CD14-positive monocyte (primary cell): ENCODE measurements at regions of chr19 and their contacts with region 1.

Region 1: DNA sequence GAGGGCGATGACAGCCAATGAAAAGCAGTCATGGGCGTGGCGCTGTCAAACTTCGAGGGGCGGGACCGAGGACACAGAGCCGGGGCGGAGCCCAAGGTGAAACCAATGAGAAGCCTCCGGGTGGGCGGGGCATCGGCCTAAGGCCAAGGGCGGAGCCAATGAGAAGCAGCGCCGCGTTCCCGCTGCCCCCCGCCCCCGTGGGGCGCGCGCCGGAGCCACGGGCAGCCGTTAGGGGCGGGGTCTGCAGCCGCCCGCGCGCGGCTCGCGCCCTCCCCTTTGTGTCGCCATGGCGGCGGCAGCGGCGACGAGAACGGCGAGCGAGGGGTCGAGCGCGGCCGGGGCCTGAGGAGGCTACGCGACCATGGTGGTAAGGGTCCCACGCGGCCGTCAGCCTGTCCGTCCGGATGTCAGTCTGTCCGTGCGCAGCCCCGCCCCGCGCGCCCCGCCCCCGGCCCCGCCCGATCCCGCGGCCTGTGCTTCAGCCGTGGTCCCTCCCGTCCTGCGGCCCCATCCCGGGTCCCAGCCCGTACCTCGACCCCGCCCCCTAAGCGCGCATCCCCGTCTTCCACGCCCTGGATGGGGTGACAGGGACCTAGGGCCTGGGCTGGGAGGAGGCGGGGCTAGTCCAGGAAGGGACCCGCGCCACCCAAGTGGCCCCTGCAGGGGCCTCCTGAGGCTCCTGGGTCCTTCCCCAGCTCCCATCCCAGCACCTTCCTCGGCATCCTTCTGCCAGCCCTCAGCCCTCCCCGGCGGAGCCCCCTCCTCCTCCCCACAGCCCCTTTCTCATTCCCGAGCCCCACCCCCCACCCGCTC is at the start of gene ARHGAP33:
- DNase-seq: peak; percentile 95 to 99 (median 97)
- H3K4me3 ChIP-seq: peak within 1 kb of the TSS; percentile 63 to 80 (median 73)
- H3K4me3 Mint-ChIP-seq: peak within 1 kb of the TSS; percentile 84 to 85
- H3K27ac ChIP-seq: peak within 1 kb of the TSS in 1 of 2 donors; percentile 45
- H3K27ac Mint-ChIP-seq: peak within 1 kb of the TSS in 4 of 7 donors; percentile 21 to 80 (median 48)
- H3K4me1 ChIP-seq: peaks cover 14 to 19% of the 10 kb centered on the region in 2 donors
- H3K4me1 Mint-ChIP-seq: peaks cover 23% of the 10 kb centered on the region
- H3K27me3 ChIP-seq: no peaks in the 10 kb centered on the region
- H3K27me3 Mint-ChIP-seq: peaks cover 0 to 5% (median 4%) of the 10 kb centered on the region in 3 donors
- CTCF ChIP-seq: no peak
- polyA plus RNA-seq, gene ARHGAP33: 8.6 TPM in 1 of 3 donors, not detected in the others

Region 2: GRCh38 chr19:35869327-35870123 is 94.0 kb after region 1 on chr19:
- intact Hi-C with region 1: loop called in 1 of 2 experiments (anchors 10 kb)
- DNase-seq: peak; percentile 54 to 62 (median 57)
- H3K4me3 ChIP-seq: peak overlapping the region in 1 of 3 experiments; percentile 52
- H3K4me3 Mint-ChIP-seq: peak overlapping the region; percentile 50 to 78
- H3K27ac ChIP-seq: no peak overlapping the region
- H3K27ac Mint-ChIP-seq: peak overlapping the region in 1 of 7 donors; percentile 1
- H3K4me1 ChIP-seq: peaks cover 16 to 23% of the 10 kb centered on the region in 2 donors
- H3K4me1 Mint-ChIP-seq: peaks cover 15% of the 10 kb centered on the region
- H3K27me3 ChIP-seq: peaks cover 27 to 52% of the 10 kb centered on the region in 2 donors
- H3K27me3 Mint-ChIP-seq: peaks cover 47 to 70% (median 54%) of the 10 kb centered on the region in 3 donors
- CTCF ChIP-seq: no peak

Region 3: DNA sequence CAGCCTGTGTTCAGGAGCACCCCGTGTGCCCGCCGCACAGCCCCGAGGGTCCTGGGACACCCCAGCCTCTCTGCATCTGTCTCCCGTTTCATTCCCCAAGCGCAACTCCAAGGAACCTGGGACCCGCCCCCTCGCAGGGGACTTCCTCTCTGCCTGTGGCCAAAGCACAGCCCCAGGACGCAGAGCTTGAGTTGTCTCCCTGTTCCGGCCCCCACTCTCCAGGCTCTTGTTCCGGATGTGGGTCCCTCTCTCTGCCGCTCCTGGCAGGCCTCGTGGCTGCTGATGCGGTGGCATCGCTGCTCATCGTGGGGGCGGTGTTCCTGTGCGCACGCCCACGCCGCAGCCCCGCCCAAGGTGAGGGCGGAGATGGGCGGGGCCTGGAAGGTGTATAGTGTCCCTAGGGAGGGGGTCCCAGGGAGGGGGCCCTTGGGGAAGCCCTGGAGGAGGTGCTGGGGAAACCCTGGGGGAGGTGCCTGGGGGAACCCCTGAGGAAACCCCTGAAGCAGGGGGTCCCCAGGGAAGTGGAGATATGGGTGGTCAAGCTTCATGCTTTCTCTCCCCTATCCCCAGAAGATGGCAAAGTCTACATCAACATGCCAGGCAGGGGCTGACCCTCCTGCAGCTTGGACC is 128.2 kb after region 1 on chr19:
- intact Hi-C with region 1: no loop called
- DNase-seq: peak; percentile 90 to 96 (median 95)
- H3K4me3 ChIP-seq: peak overlapping the region; percentile 31 to 99 (median 97)
- H3K4me3 Mint-ChIP-seq: peak overlapping the region; percentile 97 to 98
- H3K27ac ChIP-seq: peak overlapping the region; percentile 95 to 98
- H3K27ac Mint-ChIP-seq: peak overlapping the region; percentile 96 to 100 (median 100)
- H3K4me1 ChIP-seq: peaks cover 74 to 81% of the 10 kb centered on the region in 2 donors
- H3K4me1 Mint-ChIP-seq: peaks cover 61% of the 10 kb centered on the region
- H3K27me3 ChIP-seq: no peaks in the 10 kb centered on the region
- H3K27me3 Mint-ChIP-seq: peaks cover 0 to 12% (median 0%) of the 10 kb centered on the region in 3 donors
- CTCF ChIP-seq: no peak